ENCODE measurements at regions of chr4 and their contacts with region 1.

Region 1: GRCh38 chr4:77994194-77994721 is 62.9 kb upstream of the FRAS1 start:
- DNase-seq: peak; percentile 39 to 57
- H3K4me3 ChIP-seq: no peak overlapping the region
- H3K27ac ChIP-seq: no peak overlapping the region
- H3K4me1 ChIP-seq: peaks cover 0 to 21% (median 6%) of the 10 kb centered on the region in 4 experiments; a peak in 4 of 7 replicates
- H3K27me3 ChIP-seq: no peaks in the 10 kb centered on the region
- CTCF ChIP-seq: peak; percentile 7 to 81 (median 79)
- EP300 ChIP-seq: no peak
- POLR2A ChIP-seq: no peak
- RAD21 ChIP-seq: peak; percentile 79 to 85

Region 2: GRCh38 chr4:77952457-77952856 is 41.8 kb before region 1 on chr4:
- CTCF ChIA-PET with region 1: no interaction called
- POLR2A ChIA-PET with region 1: no interaction called
- DNase-seq: no peak
- H3K4me3 ChIP-seq: no peak overlapping the region
- H3K27ac ChIP-seq: no peak overlapping the region
- H3K4me1 ChIP-seq: no peaks in the 10 kb centered on the region
- H3K27me3 ChIP-seq: no peaks in the 10 kb centered on the region
- CTCF ChIP-seq: no peak
- EP300 ChIP-seq: no peak
- POLR2A ChIP-seq: no peak
- RAD21 ChIP-seq: no peak

Region 3: DNA sequence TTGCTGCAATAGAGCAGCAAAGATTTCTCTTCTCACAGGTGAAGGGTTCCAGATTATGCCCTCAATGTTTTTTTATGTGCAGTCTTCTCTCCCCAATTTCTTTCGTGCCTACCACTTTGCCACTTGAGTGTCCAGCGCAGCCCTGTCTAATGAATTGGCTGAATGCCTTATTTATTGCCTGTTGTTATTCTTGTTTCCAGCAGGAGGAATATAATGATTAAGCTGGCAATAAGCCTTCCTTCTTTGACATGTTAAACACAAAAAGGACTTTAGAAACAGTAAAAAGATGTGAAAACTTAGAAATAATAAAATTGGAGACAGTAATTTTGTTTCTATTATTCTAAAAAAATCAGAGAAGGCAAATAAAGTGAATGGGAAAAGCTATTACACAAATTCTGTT is 28.3 kb after region 1 on chr4:
- CTCF ChIA-PET with region 1: interaction called, 13 read pairs
- POLR2A ChIA-PET with region 1: no interaction called
- DNase-seq: no peak
- H3K4me3 ChIP-seq: no peak overlapping the region
- H3K27ac ChIP-seq: no peak overlapping the region
- H3K4me1 ChIP-seq: peaks cover 0 to 3% (median 0%) of the 10 kb centered on the region in 4 experiments; a peak in 1 of 7 replicates
- H3K27me3 ChIP-seq: no peaks in the 10 kb centered on the region
- CTCF ChIP-seq: no peak
- EP300 ChIP-seq: no peak
- POLR2A ChIP-seq: no peak
- RAD21 ChIP-seq: no peak

Region 4: GRCh38 chr4:78454501-78454900 is 460.2 kb after region 1 on chr4:
- CTCF ChIA-PET with region 1: no interaction called
- POLR2A ChIA-PET with region 1: no interaction called
- DNase-seq: no peak
- H3K4me3 ChIP-seq: no peak overlapping the region
- H3K27ac ChIP-seq: no peak overlapping the region
- H3K4me1 ChIP-seq: no peaks in the 10 kb centered on the region
- H3K27me3 ChIP-seq: no peaks in the 10 kb centered on the region
- CTCF ChIP-seq: no peak
- EP300 ChIP-seq: no peak
- POLR2A ChIP-seq: no peak
- RAD21 ChIP-seq: no peak

Measured in H1 (cell line).